Upper lobe of right lung (tissue), 1 donor: ENCODE measurements at regions of chr13 and their contacts with region 1.

Region 1: GRCh38 chr13:36858290-36858689 is 39.3 kb downstream of the RFXAP start:
- DNase-seq: no peak
- ATAC-seq: peak; percentile 81
- H3K4me3 ChIP-seq: no peak overlapping the region
- H3K27ac ChIP-seq: no peak overlapping the region
- H3K4me1 ChIP-seq: no peaks in the 10 kb centered on the region
- H3K27me3 ChIP-seq: no peaks in the 10 kb centered on the region
- CTCF ChIP-seq: peak; percentile 52

Region 2: DNA sequence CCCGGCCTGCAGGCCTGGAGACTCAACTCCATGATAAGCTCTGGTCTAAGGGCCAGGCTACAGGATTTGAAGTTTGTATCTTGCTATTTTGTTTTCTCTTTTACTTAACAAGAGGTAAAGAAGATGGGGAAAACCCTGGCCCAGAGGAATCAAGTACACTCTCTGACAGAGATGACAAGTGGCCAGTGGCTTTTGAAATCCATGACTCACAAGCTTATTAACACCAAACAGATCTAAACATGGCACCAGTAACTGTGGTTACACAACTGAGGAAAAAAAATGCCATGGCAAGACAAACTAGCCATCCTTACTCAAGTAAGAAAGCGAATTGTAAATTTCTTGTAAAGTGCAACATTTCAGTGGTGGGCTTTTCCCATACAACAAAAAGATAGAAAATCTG is 257.1 kb before region 1 on chr13:
- intact Hi-C with region 1: no loop called
- DNase-seq: no peak
- ATAC-seq: peak; percentile 9
- H3K4me3 ChIP-seq: no peak overlapping the region
- H3K27ac ChIP-seq: no peak overlapping the region
- H3K4me1 ChIP-seq: no peaks in the 10 kb centered on the region
- H3K27me3 ChIP-seq: no peaks in the 10 kb centered on the region
- CTCF ChIP-seq: no peak

Region 3: DNA sequence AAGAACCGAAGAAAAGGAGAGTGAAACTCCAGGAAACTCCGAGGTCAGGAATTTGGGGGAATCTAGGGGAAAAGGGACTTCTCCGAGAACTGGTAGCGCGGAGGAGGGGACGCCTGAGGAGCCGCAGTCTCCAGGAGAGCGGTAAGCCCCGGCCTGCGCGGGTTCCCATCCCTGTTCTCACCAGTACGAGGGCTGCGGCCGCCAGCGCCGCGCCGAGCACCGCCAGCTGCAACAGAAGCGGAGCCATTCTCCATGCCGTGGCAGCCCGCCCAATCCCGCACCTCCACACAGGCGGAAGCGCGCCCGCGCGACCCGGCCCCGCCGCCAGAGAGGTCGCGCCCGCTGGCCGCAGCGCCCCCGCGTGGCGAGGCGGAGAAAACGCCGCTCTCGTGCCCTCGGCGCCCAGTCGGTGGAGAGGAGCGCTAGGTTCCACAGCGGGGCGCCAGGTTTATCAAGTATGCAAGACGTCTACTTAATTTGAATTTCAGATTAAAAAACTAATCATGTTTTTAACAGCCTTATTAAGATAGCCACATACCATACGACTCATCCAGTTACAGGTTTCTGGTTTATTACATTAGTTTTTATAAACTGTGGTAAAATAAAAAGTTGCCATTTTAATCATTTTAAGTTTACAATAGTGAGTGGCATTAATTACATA is 140.9 kb after region 1 on chr13 and contains the start of gene ALG5:
- intact Hi-C with region 1: loop called (anchors 10 kb)
- DNase-seq: peak; percentile 96
- ATAC-seq: peak; percentile 96
- H3K4me3 ChIP-seq: peak within 1 kb of the TSS; percentile 95
- H3K27ac ChIP-seq: peak within 1 kb of the TSS; percentile 100
- H3K4me1 ChIP-seq: peaks cover 18% of the 10 kb centered on the region
- H3K27me3 ChIP-seq: no peaks in the 10 kb centered on the region
- CTCF ChIP-seq: peak; percentile 97
- total RNA-seq, gene ALG5: 27.2 TPM